ENCODE measurements at regions of chr15 and their contacts with region 1.

Region 1: GRCh38 chr15:81106560-81106959 is 27.5 kb upstream of the CFAP161 start:
- DNase-seq: peak; percentile 52 to 69 (median 59)
- H3K4me3 ChIP-seq: no peak overlapping the region
- H3K27ac ChIP-seq: no peak overlapping the region
- H3K4me1 ChIP-seq: peaks cover 0 to 1% (median 0%) of the 10 kb centered on the region in 4 experiments
- H3K27me3 ChIP-seq: peaks cover 0 to 3% (median 0%) of the 10 kb centered on the region in 5 experiments

Region 2: DNA sequence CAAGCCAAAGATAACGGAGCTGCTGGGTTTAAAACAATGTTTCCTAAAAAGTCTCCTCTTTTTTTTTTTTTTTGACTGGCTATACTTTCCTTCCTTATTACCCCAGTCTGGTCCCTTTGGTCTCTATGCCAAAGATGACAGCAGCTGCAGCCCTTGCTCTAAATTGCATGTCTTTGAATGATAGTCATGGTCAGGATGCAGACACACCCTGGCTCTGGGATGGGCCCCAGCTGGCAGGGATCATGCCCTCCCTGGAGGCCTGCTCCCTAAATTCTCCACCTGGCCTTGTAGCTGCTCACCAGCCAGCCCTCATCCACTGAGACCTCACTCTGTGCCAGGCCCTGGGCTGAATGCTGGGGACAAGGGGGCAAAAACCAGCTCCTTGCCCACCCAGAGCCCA is 212.8 kb before region 1 on chr15:
- CTCF ChIA-PET with region 1: no interaction called
- POLR2A ChIA-PET with region 1: no interaction called
- DNase-seq: no peak
- H3K4me3 ChIP-seq: no peak overlapping the region
- H3K27ac ChIP-seq: no peak overlapping the region
- H3K4me1 ChIP-seq: no peaks in the 10 kb centered on the region
- H3K27me3 ChIP-seq: no peaks in the 10 kb centered on the region

Region 3: GRCh38 chr15:80977627-80978036 is 128.9 kb before region 1 on chr15:
- CTCF ChIA-PET with region 1: interaction called, 28 read pairs
- POLR2A ChIA-PET with region 1: interaction called, 3 read pairs
- DNase-seq: peak; percentile 47 to 70 (median 54)
- H3K4me3 ChIP-seq: no peak overlapping the region
- H3K27ac ChIP-seq: peak overlapping the region in 1 of 2 experiments; percentile 20
- H3K4me1 ChIP-seq: peaks cover 0 to 7% (median 0%) of the 10 kb centered on the region in 4 experiments
- H3K27me3 ChIP-seq: no peaks in the 10 kb centered on the region

Region 4: GRCh38 chr15:81091889-81092558 is 14.5 kb before region 1 on chr15:
- CTCF ChIA-PET with region 1: interaction called, 10 read pairs
- POLR2A ChIA-PET with region 1: no interaction called
- DNase-seq: peak in 2 of 3 donors; percentile 37 to 44
- H3K4me3 ChIP-seq: peak overlapping the region in 3 of 7 experiments; percentile 1 to 17 (median 7)
- H3K27ac ChIP-seq: no peak overlapping the region
- H3K4me1 ChIP-seq: peaks cover 7 to 49% (median 24%) of the 10 kb centered on the region in 4 experiments
- H3K27me3 ChIP-seq: no peaks in the 10 kb centered on the region

Region 5: DNA sequence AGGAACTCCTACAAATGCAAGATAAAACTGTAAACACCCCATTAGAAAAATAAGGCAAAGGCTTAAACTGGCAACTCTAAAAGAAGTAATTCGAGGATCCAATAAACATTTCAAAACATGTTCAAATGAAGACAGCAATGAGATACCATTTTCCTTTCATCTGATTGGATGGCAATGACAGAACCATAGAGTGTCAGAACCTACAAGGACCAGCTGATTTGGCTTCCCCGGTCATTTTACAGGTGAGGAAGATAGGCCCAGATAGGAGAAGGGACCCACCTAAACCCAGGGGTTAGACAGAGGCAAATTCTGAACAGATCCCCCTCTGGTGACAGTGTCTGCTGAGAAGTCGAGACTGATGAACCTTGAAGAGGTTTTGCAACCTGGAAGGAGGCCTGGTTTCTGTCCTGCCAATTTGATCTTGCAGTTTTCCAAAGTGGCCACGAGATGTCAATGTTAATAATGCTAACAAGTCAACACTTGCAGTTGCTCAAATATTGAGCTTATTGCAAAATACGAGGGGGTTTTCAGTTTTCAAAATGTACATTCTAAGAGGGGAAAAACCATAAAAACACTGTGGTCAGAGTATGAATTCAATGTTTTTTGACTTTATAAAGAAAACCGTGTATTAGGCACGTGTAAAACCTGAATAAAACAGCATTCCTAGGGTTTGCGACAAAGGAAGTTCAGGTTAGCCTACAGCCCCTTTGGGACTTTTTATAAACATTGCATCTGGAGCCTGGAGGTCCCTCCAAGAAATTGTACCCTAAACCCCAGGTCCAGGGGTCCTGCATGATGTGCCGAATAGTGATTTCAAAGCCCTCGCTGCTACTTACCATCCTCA is 49.0 kb after region 1 on chr15:
- CTCF ChIA-PET with region 1: interaction called, 10 read pairs
- POLR2A ChIA-PET with region 1: no interaction called
- DNase-seq: peak; percentile 65 to 81 (median 79)
- H3K4me3 ChIP-seq: peak overlapping the region in 1 of 7 experiments; percentile 13
- H3K27ac ChIP-seq: no peak overlapping the region
- H3K4me1 ChIP-seq: peaks cover 0 to 13% (median 3%) of the 10 kb centered on the region in 4 experiments
- H3K27me3 ChIP-seq: peaks cover 0 to 4% (median 0%) of the 10 kb centered on the region in 5 experiments

Region 6: GRCh38 chr15:81312790-81313543 is 206.4 kb after region 1 on chr15:
- CTCF ChIA-PET with region 1: no interaction called
- POLR2A ChIA-PET with region 1: no interaction called
- DNase-seq: no peak
- H3K4me3 ChIP-seq: no peak overlapping the region
- H3K27ac ChIP-seq: peak overlapping the region; percentile 22 to 63
- H3K4me1 ChIP-seq: peaks cover 20 to 32% (median 27%) of the 10 kb centered on the region in 4 experiments
- H3K27me3 ChIP-seq: no peaks in the 10 kb centered on the region